Breast epithelium (tissue), 4 donors: ENCODE measurements at regions of chr1 and their contacts with region 1.

Region 1: GRCh38 chr1:238123201-238123600 is 232.5 kb upstream of the ZP4 start:
- DNase-seq: no peak
- H3K4me3 ChIP-seq: no peak overlapping the region
- H3K27ac ChIP-seq: no peak overlapping the region
- H3K4me1 ChIP-seq: no peaks in the 10 kb centered on the region
- H3K27me3 ChIP-seq: no peaks in the 10 kb centered on the region
- CTCF ChIP-seq: no peak
- POLR2A ChIP-seq: no peak

Region 2: GRCh38 chr1:238257018-238257621 is 133.9 kb after region 1 on chr1:
- intact Hi-C with region 1: loop called (anchors 5 kb)
- DNase-seq: no peak
- H3K4me3 ChIP-seq: no peak overlapping the region
- H3K27ac ChIP-seq: no peak overlapping the region
- H3K4me1 ChIP-seq: no peaks in the 10 kb centered on the region
- H3K27me3 ChIP-seq: no peaks in the 10 kb centered on the region
- CTCF ChIP-seq: no peak
- POLR2A ChIP-seq: no peak